CD8-positive, alpha-beta T cell (primary cell): ENCODE measurements at regions of chr5 and their contacts with region 1.

Region 1: GRCh38 chr5:53418844-53419646 is 61.4 kb upstream of the FST start:
- DNase-seq: no peak
- ATAC-seq: no peak
- H3K4me3 ChIP-seq: no peak overlapping the region
- H3K4me3 Mint-ChIP-seq: no peak overlapping the region
- H3K27ac ChIP-seq: no peak overlapping the region
- H3K27ac Mint-ChIP-seq: no peak overlapping the region
- H3K4me1 ChIP-seq: no peaks in the 10 kb centered on the region
- H3K4me1 Mint-ChIP-seq: no peaks in the 10 kb centered on the region
- H3K27me3 ChIP-seq: no peaks in the 10 kb centered on the region
- H3K27me3 Mint-ChIP-seq: peaks cover 12% of the 10 kb centered on the region
- CTCF ChIP-seq: no peak

Region 2: DNA sequence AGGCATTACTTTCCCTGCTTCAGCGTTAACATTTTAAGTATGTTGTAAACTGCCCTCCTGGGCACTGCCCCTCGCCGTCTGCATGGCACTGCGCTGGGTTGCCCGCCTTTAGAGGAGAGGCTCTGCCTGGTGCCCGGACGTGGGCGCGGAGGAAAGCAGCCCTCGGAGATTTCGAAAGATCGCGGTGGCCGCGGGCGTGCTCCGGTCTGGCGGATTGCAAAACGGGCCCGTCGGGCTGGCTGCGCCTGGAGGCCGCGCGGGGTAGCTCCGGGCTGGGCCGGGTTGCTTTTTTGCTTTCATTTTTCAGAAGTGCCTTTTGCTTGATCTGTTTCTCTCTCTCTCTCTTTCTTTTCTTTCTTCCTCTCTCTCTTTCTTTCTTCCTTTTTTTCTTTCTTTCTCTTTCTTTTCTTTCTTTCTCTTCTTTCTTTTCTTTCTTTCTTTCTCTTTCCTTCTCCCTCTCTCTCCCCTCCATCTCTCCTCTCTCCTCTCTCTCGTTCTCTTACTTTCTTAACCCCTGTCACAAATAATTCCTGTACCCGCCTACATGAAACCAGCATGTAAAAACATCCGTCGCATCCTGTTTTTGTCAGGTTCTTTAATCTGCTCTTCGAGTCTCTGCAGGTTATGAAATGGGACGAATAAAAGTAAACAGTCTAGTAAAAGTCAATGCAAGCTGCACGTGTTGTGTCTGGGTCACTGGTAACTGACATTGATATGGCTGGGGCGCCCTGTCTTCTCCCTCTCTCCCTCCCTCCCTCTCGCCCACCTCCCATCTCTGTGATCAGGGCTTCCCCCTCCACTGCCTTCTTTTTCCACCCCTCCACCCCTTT is 63.1 kb after region 1 on chr5:
- CTCF ChIA-PET with region 1: no interaction called
- POLR2A ChIA-PET with region 1: no interaction called
- intact Hi-C with region 1: no loop called
- DNase-seq: peak in 7 of 9 experiments; percentile 35 to 72 (median 53)
- ATAC-seq: peak; percentile 68
- H3K4me3 ChIP-seq: peak overlapping the region; percentile 48 to 60
- H3K4me3 Mint-ChIP-seq: peak overlapping the region; percentile 86
- H3K27ac ChIP-seq: no peak overlapping the region
- H3K27ac Mint-ChIP-seq: peak overlapping the region; percentile 43
- H3K4me1 ChIP-seq: peaks cover 12% of the 10 kb centered on the region
- H3K4me1 Mint-ChIP-seq: peaks cover 39% of the 10 kb centered on the region
- H3K27me3 ChIP-seq: peaks cover 13 to 14% of the 10 kb centered on the region in 2 experiments
- H3K27me3 Mint-ChIP-seq: peaks cover 47% of the 10 kb centered on the region
- CTCF ChIP-seq: peak; percentile 29

Region 3: DNA sequence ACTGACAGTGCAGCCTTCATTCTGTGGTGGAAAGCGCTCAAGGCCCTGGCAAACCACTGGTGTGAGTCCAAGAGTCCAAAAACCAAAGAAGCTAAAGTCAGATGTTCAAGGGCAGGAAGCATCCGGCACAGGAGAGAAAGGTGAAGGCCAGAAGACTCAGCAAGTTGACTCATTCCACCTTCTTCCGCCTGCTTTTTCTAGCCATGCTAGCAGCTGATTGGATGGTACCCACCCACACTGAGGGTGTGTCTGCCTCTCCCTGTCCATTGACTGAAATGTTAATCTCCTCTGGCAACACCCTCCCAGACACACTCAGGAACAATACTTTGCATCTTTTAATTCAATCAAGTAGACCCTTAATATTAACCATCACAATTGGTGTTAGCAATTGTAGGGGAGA is 437.5 kb after region 1 on chr5:
- CTCF ChIA-PET with region 1: no interaction called
- POLR2A ChIA-PET with region 1: no interaction called
- intact Hi-C with region 1: loop called in 1 of 2 experiments (anchors 5 kb)
- DNase-seq: no peak
- ATAC-seq: no peak
- H3K4me3 ChIP-seq: no peak overlapping the region
- H3K4me3 Mint-ChIP-seq: no peak overlapping the region
- H3K27ac ChIP-seq: no peak overlapping the region
- H3K27ac Mint-ChIP-seq: no peak overlapping the region
- H3K4me1 ChIP-seq: no peaks in the 10 kb centered on the region
- H3K4me1 Mint-ChIP-seq: no peaks in the 10 kb centered on the region
- H3K27me3 ChIP-seq: no peaks in the 10 kb centered on the region
- H3K27me3 Mint-ChIP-seq: peaks cover 5% of the 10 kb centered on the region
- CTCF ChIP-seq: no peak